Mammary epithelial cell (primary cell): ENCODE measurements at regions of chr1 and their contacts with region 1.

Region 1: GRCh38 chr1:3996846-3997705 is 97.0 kb upstream of the C1orf174 start:
- DNase-seq: no peak
- H3K4me3 ChIP-seq: no peak overlapping the region
- H3K27ac ChIP-seq: no peak overlapping the region
- H3K4me1 ChIP-seq: no peaks in the 10 kb centered on the region
- H3K27me3 ChIP-seq: no peaks in the 10 kb centered on the region
- CTCF ChIP-seq: no peak

Region 2: GRCh38 chr1:3624200-3625136 is 372.6 kb before region 1 on chr1 and contains the start of gene TPRG1L:
- CTCF ChIA-PET with region 1: no interaction called
- dilution Hi-C with region 1: no loop called
- in situ Hi-C with region 1: no loop called
- intact Hi-C with region 1: no loop called
- DNase-seq: peak; percentile 94
- H3K4me3 ChIP-seq: peak within 1 kb of the TSS; percentile 75 to 100 (median 77)
- H3K27ac ChIP-seq: no peak within 1 kb of the TSS
- H3K4me1 ChIP-seq: peaks cover 18% of the 10 kb centered on the region
- H3K27me3 ChIP-seq: no peaks in the 10 kb centered on the region
- CTCF ChIP-seq: no peak
- total RNA-seq, gene TPRG1L: 44.2 to 48.6 TPM

Region 3: GRCh38 chr1:3948364-3948763 is 48.7 kb before region 1 on chr1:
- CTCF ChIA-PET with region 1: no interaction called
- dilution Hi-C with region 1: loop called (anchors 5 kb)
- in situ Hi-C with region 1: no loop called
- intact Hi-C with region 1: no loop called
- DNase-seq: no peak
- H3K4me3 ChIP-seq: no peak overlapping the region
- H3K27ac ChIP-seq: no peak overlapping the region
- H3K4me1 ChIP-seq: no peaks in the 10 kb centered on the region
- H3K27me3 ChIP-seq: no peaks in the 10 kb centered on the region
- CTCF ChIP-seq: no peak

Region 4: GRCh38 chr1:3978990-3979325 is 18.1 kb before region 1 on chr1:
- CTCF ChIA-PET with region 1: no interaction called
- dilution Hi-C with region 1: no loop called
- in situ Hi-C with region 1: no loop called
- intact Hi-C with region 1: no loop called
- DNase-seq: no peak
- H3K4me3 ChIP-seq: no peak overlapping the region
- H3K27ac ChIP-seq: no peak overlapping the region
- H3K4me1 ChIP-seq: no peaks in the 10 kb centered on the region
- H3K27me3 ChIP-seq: no peaks in the 10 kb centered on the region
- CTCF ChIP-seq: no peak